Left lung (tissue), 14 donors: ENCODE measurements at regions of chr1 and their contacts with region 1.

Region 1: DNA sequence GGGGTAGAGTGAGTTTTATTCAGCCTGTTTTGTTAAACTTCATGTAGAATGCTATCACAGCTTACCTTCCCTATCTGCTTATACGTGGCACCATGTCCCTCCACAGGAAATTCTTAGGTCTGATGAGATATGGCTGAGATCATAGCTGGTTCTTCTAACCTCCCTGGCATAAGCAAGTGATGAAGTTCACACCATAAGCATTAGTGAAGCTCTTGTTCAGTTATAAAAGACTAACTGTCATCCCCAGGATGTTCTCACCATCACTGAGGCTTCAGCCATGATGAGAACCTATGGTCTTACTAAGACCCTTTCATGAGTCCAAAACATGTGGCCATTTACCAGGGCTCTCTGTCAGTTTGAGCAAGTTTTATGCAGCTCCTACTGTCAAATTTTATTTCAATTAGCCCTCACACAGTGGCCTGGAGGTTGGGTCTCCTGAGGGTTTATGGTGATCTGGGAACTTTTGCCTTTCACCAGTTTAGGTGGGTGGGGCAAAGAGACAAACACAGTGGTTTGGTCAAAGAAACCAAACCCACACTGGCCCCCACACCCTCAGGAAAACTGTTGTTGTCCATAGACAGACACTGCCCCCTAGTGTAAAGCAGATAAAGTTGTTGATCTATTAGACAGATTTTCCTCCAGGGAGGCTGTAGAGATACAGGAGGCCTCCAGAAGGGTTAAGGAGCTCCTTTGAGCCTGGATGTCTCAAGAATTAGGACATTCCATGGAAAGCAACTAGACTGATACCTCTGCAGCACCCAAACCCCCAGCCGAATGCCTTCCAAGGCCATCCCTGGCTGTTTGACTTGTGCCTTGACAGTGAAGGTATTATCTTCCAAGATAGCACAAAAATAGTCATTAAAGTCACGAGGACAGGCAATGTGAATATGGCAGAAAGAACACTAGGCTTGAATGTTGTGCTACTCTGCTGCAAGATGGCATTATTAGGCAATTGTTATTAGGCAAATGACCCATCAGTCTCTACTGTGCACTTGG is 5.0 kb downstream of the SLC22A15 start:
- DNase-seq: peak in 2 of 4 donors; percentile 6 to 17
- ATAC-seq: peak; percentile 63
- H3K4me3 ChIP-seq: no peak overlapping the region
- H3K27ac ChIP-seq: no peak overlapping the region
- H3K4me1 ChIP-seq: peaks cover 5 to 56% of the 10 kb centered on the region in 2 donors
- H3K27me3 ChIP-seq: peaks cover 0 to 5% of the 10 kb centered on the region in 2 donors
- CTCF ChIP-seq: peak in 1 of 2 donors; percentile 57

Region 2: DNA sequence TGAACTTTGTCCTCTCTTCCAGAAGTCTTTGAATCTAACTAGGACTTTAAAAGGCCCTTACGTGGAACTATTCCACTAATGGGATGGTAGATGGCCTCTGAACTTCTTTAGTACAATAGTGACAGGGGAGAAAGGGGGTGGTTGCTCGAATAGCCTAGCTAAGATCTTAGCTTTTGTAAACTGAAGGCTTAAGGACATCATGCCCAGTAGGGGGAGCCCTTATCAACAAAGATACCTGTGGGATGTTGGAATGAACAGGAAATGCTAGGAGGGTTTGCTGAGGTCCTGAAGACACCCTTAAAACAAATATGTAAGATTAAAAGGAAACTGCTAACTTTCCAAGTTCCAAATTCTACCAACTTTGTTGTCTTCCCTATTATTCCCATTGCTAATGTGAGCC is 173.6 kb before region 1 on chr1:
- intact Hi-C with region 1: loop called in 1 of 2 experiments (anchors 5 kb)
- DNase-seq: peak in 2 of 4 donors; percentile 37 to 71
- ATAC-seq: peak; percentile 77
- H3K4me3 ChIP-seq: no peak overlapping the region
- H3K27ac ChIP-seq: no peak overlapping the region
- H3K4me1 ChIP-seq: peaks cover 3 to 25% of the 10 kb centered on the region in 2 donors
- H3K27me3 ChIP-seq: no peaks in the 10 kb centered on the region
- CTCF ChIP-seq: peak; percentile 68 to 77